ENCODE measurements at regions of chr12 and their contacts with region 1.

Region 1: DNA sequence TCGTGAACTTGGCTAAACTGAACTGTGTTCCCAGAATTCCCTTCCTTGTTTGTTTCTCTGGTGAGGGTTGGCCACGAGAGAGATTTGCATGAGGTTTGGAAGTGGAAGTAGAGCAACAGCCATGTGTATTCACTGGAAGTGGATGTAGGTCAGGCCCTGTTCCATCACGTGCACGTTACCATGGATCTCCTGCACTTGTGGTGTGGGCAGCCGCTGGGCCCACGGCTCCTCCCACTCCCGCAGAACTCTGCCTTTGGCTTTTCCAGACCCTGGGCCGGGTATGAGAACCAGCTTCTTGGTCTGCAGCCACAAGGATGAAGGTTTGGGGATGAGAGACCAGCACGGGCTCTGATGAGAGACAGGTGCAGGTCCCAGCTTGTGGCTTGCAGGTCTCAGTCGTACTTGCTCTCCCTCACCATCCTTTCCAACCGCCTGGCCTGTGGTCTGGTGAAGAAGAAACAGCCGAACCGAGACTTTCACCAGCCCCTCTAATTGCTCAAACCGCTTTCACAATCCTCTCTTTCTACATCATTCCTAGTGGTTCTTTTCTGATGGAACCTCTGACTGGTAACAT is 94.9 kb downstream of the DUSP16 start:
- DNase-seq: peak in 2 of 10 donors; percentile 27 to 39
- ATAC-seq: no peak
- H3K4me3 Mint-ChIP-seq: peak overlapping the region in 9 of 10 donors; percentile 6 to 53 (median 39)
- H3K27ac Mint-ChIP-seq: peak overlapping the region; percentile 90 to 100 (median 96)
- H3K4me1 Mint-ChIP-seq: peaks cover 26 to 60% (median 52%) of the 10 kb centered on the region in 4 donors
- H3K27me3 Mint-ChIP-seq: no peaks in the 10 kb centered on the region

Region 2: GRCh38 chr12:12442548-12443071 is 25.2 kb before region 1 on chr12:
- POLR2A ChIA-PET with region 1: interaction called, 44 read pairs
- DNase-seq: no peak
- ATAC-seq: no peak
- H3K4me3 Mint-ChIP-seq: peak overlapping the region in 8 of 10 donors; percentile 37 to 81 (median 74)
- H3K27ac Mint-ChIP-seq: peak overlapping the region; percentile 93 to 99 (median 98)
- H3K4me1 Mint-ChIP-seq: peaks cover 37 to 82% (median 63%) of the 10 kb centered on the region in 4 donors
- H3K27me3 Mint-ChIP-seq: no peaks in the 10 kb centered on the region

Region 3: GRCh38 chr12:12482959-12483358 is 15.2 kb after region 1 on chr12:
- POLR2A ChIA-PET with region 1: interaction called, 37 read pairs
- DNase-seq: no peak
- ATAC-seq: no peak
- H3K4me3 Mint-ChIP-seq: peak overlapping the region; percentile 42 to 92 (median 73)
- H3K27ac Mint-ChIP-seq: peak overlapping the region; percentile 93 to 100 (median 97)
- H3K4me1 Mint-ChIP-seq: peaks cover 19 to 64% (median 36%) of the 10 kb centered on the region in 4 donors
- H3K27me3 Mint-ChIP-seq: no peaks in the 10 kb centered on the region